CD8-positive, alpha-beta T cell (primary cell): ENCODE measurements at regions of chr19 and their contacts with region 1.

Region 1: GRCh38 chr19:39125554-39126311 is at the start of gene PAK4:
- DNase-seq: peak; percentile 92 to 97 (median 96)
- ATAC-seq: peak; percentile 92
- H3K4me3 ChIP-seq: peak within 1 kb of the TSS; percentile 72 to 91
- H3K4me3 Mint-ChIP-seq: peak within 1 kb of the TSS; percentile 99
- H3K27ac ChIP-seq: peak within 1 kb of the TSS; percentile 64 to 84
- H3K27ac Mint-ChIP-seq: peak within 1 kb of the TSS; percentile 97
- H3K4me1 ChIP-seq: peaks cover 7% of the 10 kb centered on the region
- H3K4me1 Mint-ChIP-seq: peaks cover 41% of the 10 kb centered on the region
- H3K27me3 ChIP-seq: no peaks in the 10 kb centered on the region
- H3K27me3 Mint-ChIP-seq: peaks cover 4% of the 10 kb centered on the region
- CTCF ChIP-seq: no peak
- total RNA-seq, gene PAK4: 6.4 to 7.8 TPM

Region 2: GRCh38 chr19:38912600-38913514 is 212.9 kb before region 1 on chr19:
- CTCF ChIA-PET with region 1: no interaction called
- POLR2A ChIA-PET with region 1: no interaction called
- intact Hi-C with region 1: no loop called
- DNase-seq: no peak
- ATAC-seq: no peak
- H3K4me3 ChIP-seq: no peak overlapping the region
- H3K4me3 Mint-ChIP-seq: no peak overlapping the region
- H3K27ac ChIP-seq: no peak overlapping the region
- H3K27ac Mint-ChIP-seq: no peak overlapping the region
- H3K4me1 ChIP-seq: peaks cover 8% of the 10 kb centered on the region
- H3K4me1 Mint-ChIP-seq: peaks cover 13% of the 10 kb centered on the region
- H3K27me3 ChIP-seq: no peaks in the 10 kb centered on the region
- H3K27me3 Mint-ChIP-seq: no peaks in the 10 kb centered on the region
- CTCF ChIP-seq: no peak

Region 3: GRCh38 chr19:39078436-39079200 is 47.1 kb before region 1 on chr19:
- CTCF ChIA-PET with region 1: no interaction called
- POLR2A ChIA-PET with region 1: interaction called, 6 read pairs
- intact Hi-C with region 1: loop called in 1 of 2 experiments (anchors 2 kb)
- DNase-seq: no peak
- ATAC-seq: no peak
- H3K4me3 ChIP-seq: no peak overlapping the region
- H3K4me3 Mint-ChIP-seq: no peak overlapping the region
- H3K27ac ChIP-seq: no peak overlapping the region
- H3K27ac Mint-ChIP-seq: no peak overlapping the region
- H3K4me1 ChIP-seq: peaks cover 17% of the 10 kb centered on the region
- H3K4me1 Mint-ChIP-seq: peaks cover 21% of the 10 kb centered on the region
- H3K27me3 ChIP-seq: peaks cover 6% of the 10 kb centered on the region in 2 experiments
- H3K27me3 Mint-ChIP-seq: peaks cover 32% of the 10 kb centered on the region
- CTCF ChIP-seq: no peak

Region 4: DNA sequence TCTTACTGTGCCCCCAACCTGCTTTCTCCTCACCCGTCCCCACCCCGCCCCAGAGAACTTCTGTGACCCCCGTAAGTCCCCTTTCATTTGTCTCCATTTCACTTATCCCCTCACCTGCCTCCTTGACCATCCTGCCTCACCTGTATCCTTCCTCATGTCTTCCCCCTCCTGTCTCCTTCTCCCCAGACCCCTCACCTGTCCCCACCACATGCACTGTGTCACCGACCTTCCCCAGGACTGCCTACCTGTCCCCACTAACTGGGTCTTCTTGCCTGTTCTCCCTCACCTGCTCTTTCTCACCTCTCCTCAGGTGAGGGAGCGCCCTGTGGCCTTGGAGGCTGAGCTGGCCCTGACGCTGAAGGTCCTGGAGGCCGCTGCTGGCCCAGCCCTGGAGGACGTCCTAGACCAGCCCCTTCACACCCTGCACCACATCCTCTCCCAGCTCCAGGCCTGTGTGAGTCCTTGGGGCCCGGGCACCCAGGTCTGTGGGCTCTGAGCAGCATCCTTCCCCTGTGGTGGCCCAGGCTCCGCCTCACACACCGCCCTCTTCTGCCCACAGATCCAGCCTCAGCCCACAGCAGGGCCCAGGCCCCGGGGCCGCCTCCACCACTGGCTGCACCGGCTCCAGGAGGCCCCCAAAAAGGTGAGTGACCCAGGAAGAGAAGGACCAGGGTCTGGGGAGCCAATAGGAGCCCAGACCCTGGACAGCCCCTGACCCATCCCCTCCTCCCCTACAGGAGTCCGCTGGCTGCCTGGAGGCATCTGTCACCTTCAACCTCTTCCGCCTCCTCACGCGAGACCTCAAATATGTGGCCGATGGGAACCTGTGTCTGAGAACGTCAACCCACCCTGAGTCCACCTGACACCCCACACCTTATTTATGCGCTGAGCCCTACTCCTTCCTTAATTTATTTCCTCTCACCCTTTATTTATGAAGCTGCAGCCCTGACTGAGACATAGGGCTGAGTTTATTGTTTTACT is 172.2 kb after region 1 on chr19:
- CTCF ChIA-PET with region 1: interaction called, 3 read pairs
- POLR2A ChIA-PET with region 1: no interaction called
- intact Hi-C with region 1: loop called in 1 of 2 experiments (anchors 1 kb)
- DNase-seq: peak; percentile 44 to 88 (median 66)
- ATAC-seq: peak; percentile 86
- H3K4me3 ChIP-seq: peak overlapping the region in 1 of 2 experiments; percentile 40
- H3K4me3 Mint-ChIP-seq: peak overlapping the region; percentile 72
- H3K27ac ChIP-seq: peak overlapping the region in 1 of 2 experiments; percentile 36
- H3K27ac Mint-ChIP-seq: peak overlapping the region; percentile 56
- H3K4me1 ChIP-seq: peaks cover 19% of the 10 kb centered on the region
- H3K4me1 Mint-ChIP-seq: peaks cover 24% of the 10 kb centered on the region
- H3K27me3 ChIP-seq: no peaks in the 10 kb centered on the region
- H3K27me3 Mint-ChIP-seq: no peaks in the 10 kb centered on the region
- CTCF ChIP-seq: no peak

Region 5: DNA sequence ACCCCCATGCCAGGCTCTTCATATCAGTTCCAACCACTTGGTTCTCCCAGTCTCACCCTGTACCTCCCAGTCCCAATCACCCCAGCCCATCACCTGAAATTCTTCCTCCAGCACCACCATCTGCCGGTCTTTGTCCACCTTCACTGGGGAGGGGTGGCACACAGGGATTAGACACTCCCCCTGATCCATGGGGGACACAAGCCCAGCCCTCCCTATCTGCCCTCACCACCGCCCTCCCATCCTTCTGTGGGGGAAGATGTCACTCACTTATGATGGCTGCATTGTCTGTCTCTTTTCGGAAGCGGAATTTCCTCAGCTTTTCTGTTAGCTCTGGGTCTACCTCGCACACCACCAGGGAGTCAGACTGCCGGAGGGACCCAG is 209.4 kb after region 1 on chr19:
- CTCF ChIA-PET with region 1: interaction called, 17 read pairs
- POLR2A ChIA-PET with region 1: interaction called, 3 read pairs
- intact Hi-C with region 1: loop called in 1 of 2 experiments (anchors 5 kb)
- DNase-seq: peak in 6 of 9 experiments; percentile 10 to 63 (median 38)
- ATAC-seq: peak; percentile 39
- H3K4me3 ChIP-seq: peak overlapping the region; percentile 68 to 96
- H3K4me3 Mint-ChIP-seq: peak overlapping the region; percentile 97
- H3K27ac ChIP-seq: peak overlapping the region; percentile 83 to 96
- H3K27ac Mint-ChIP-seq: peak overlapping the region; percentile 99
- H3K4me1 ChIP-seq: peaks cover 52% of the 10 kb centered on the region
- H3K4me1 Mint-ChIP-seq: peaks cover 60% of the 10 kb centered on the region
- H3K27me3 ChIP-seq: no peaks in the 10 kb centered on the region
- H3K27me3 Mint-ChIP-seq: no peaks in the 10 kb centered on the region
- CTCF ChIP-seq: no peak

Region 6: GRCh38 chr19:39390755-39391592 is 265.2 kb after region 1 on chr19 and contains the starts of genes MED29 and PAF1:
- CTCF ChIA-PET with region 1: no interaction called
- POLR2A ChIA-PET with region 1: no interaction called
- intact Hi-C with region 1: loop called in 1 of 2 experiments (anchors 2 kb)
- DNase-seq: peak; percentile 89 to 100 (median 94)
- ATAC-seq: peak; percentile 87
- H3K4me3 ChIP-seq: peak within 1 kb of the TSS; percentile 86 to 95
- H3K4me3 Mint-ChIP-seq: peak within 1 kb of the TSS; percentile 96
- H3K27ac ChIP-seq: peak within 1 kb of the TSS; percentile 99
- H3K27ac Mint-ChIP-seq: peak within 1 kb of the TSS; percentile 100
- H3K4me1 ChIP-seq: peaks cover 19% of the 10 kb centered on the region
- H3K4me1 Mint-ChIP-seq: peaks cover 37% of the 10 kb centered on the region
- H3K27me3 ChIP-seq: no peaks in the 10 kb centered on the region
- H3K27me3 Mint-ChIP-seq: no peaks in the 10 kb centered on the region
- CTCF ChIP-seq: no peak
- total RNA-seq, gene MED29: 45.9 to 55.1 TPM
- total RNA-seq, gene PAF1: 109 to 117 TPM

Region 7: DNA sequence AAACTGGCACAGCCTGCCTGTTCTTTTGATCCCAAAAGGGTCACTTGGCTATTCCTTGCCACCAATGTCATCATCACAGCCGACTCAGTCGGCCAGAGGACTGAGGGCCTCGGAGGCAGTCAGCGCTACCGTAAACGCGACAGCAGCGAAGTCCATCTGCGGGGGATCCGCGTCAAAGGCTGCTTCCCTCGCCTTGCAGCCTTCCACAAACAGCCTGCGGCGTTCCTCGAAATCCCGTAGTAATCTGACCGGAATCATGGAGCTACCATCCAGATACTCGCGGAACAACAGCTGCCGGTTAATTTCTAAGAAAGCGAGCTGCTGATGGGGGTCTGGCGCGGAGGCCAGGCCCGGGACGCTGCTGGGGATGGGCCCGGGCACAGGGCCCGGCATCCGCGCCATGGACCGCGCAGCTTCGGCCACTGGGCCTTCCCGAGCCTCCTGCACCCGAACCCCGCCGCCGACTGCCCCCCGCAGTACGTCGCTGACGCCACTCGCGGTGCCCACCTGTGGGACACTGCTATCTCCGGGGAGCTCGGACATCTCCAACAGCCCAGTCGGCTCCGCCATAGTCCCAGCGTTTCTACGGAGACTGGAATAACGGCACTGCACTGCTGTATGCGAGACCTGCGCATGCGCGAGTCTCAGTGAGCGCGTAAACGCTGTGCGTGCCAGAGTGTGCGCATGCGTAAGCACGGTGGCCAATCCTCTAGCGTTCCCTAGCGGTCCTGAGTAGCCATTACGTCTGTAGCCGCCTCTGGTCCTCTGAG is 406.7 kb after region 1 on chr19 and contains the start of gene EID2B:
- CTCF ChIA-PET with region 1: no interaction called
- POLR2A ChIA-PET with region 1: no interaction called
- intact Hi-C with region 1: loop called in 1 of 2 experiments (anchors 2 kb)
- DNase-seq: peak; percentile 83 to 98 (median 96)
- ATAC-seq: peak; percentile 98
- H3K4me3 ChIP-seq: peak within 1 kb of the TSS; percentile 77 to 93
- H3K4me3 Mint-ChIP-seq: peak within 1 kb of the TSS; percentile 93
- H3K27ac ChIP-seq: peak within 1 kb of the TSS; percentile 69 to 80
- H3K27ac Mint-ChIP-seq: peak within 1 kb of the TSS; percentile 87
- H3K4me1 ChIP-seq: peaks cover 9% of the 10 kb centered on the region
- H3K4me1 Mint-ChIP-seq: peaks cover 31% of the 10 kb centered on the region
- H3K27me3 ChIP-seq: no peaks in the 10 kb centered on the region
- H3K27me3 Mint-ChIP-seq: no peaks in the 10 kb centered on the region
- CTCF ChIP-seq: peak; percentile 99
- total RNA-seq, gene EID2B: 3.5 to 3.7 TPM

Region 8: DNA sequence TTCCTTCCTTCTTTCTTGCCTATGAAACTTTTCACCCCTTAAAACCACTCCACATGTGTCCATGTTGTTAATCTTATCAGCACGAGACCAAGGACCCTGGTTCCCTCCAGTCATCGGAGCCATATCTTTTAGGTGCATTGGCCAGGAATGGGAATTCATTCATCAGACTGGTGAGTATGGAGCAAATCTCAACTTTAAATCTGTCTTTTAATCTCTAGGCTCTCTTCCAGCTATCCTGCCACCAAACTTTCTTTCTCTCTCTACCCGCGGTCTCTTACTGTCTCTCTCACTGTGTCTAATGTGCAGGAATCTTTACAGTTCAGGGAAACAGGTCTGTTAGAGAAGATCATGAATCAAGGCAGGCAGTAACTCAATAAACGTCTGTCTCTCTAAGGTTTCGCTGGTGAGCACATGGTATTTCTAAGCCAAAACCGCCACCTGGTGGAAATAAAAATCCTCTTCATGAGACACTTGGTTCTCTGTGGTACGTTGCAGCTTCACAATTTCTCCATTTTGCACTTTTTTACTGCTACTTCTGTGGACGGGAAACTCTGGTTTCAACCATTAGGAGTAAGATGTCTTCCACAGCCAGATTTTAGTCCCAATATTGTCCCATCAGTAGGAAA is 546.1 kb after region 1 on chr19:
- CTCF ChIA-PET with region 1: interaction called, 3 read pairs
- POLR2A ChIA-PET with region 1: no interaction called
- intact Hi-C with region 1: loop called in 1 of 2 experiments (anchors 10 kb)
- DNase-seq: peak in 7 of 9 experiments; percentile 19 to 74 (median 46)
- ATAC-seq: peak; percentile 78
- H3K4me3 ChIP-seq: no peak overlapping the region
- H3K4me3 Mint-ChIP-seq: no peak overlapping the region
- H3K27ac ChIP-seq: no peak overlapping the region
- H3K27ac Mint-ChIP-seq: no peak overlapping the region
- H3K4me1 ChIP-seq: peaks cover 12% of the 10 kb centered on the region
- H3K4me1 Mint-ChIP-seq: peaks cover 7% of the 10 kb centered on the region
- H3K27me3 ChIP-seq: no peaks in the 10 kb centered on the region
- H3K27me3 Mint-ChIP-seq: peaks cover 13% of the 10 kb centered on the region
- CTCF ChIP-seq: peak; percentile 66